ENCODE measurements at regions of chr15 and their contacts with region 1.

Region 1: DNA sequence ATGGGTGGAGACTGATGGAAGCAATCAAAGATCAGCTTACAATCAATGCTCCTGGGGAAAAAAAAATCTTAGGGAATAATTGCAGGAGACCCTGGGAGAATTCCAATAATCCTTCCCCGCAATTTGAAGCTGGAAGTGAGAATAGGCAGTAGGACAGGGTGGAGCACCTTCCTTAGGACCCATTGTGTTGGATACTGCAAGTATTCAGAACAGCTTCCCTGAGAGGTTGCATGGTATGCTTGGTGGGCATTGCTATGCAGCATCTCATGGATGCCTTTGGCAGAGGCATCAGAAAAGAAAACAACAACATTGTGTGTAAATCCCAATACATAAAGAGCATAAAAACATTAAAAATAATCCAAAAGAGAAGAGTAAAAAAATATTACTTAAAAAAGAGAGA is 24.6 kb upstream of the DUT start:
- DNase-seq: no peak
- H3K4me3 ChIP-seq: no peak overlapping the region
- H3K27ac ChIP-seq: no peak overlapping the region
- H3K4me1 ChIP-seq: no peaks in the 10 kb centered on the region
- H3K27me3 ChIP-seq: no peaks in the 10 kb centered on the region
- CTCF ChIP-seq: no peak

Region 2: DNA sequence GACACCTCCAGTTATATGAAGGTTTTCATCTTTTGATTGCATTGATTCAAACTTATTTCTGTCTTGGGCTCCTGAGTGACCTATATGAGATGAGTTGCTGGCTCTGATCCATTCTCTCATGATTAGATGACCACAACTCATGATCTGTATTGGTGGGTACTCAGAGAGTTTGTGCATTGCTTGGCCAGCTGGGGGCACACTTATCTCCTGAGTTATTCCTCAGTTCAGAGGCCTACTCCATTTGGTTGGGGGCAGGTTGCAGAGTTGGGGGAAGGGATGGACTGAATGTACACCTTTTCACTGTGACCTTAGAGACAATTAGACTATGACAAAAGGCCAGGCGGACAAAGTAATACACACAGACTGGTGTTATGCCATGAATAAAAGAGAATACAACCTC is 755.6 kb before region 1 on chr15:
- CTCF ChIA-PET with region 1: no interaction called
- POLR2A ChIA-PET with region 1: no interaction called
- intact Hi-C with region 1: no loop called
- DNase-seq: peak; percentile 34
- H3K4me3 ChIP-seq: no peak overlapping the region
- H3K27ac ChIP-seq: no peak overlapping the region
- H3K4me1 ChIP-seq: no peaks in the 10 kb centered on the region
- H3K27me3 ChIP-seq: no peaks in the 10 kb centered on the region
- CTCF ChIP-seq: peak; percentile 60

Region 3: DNA sequence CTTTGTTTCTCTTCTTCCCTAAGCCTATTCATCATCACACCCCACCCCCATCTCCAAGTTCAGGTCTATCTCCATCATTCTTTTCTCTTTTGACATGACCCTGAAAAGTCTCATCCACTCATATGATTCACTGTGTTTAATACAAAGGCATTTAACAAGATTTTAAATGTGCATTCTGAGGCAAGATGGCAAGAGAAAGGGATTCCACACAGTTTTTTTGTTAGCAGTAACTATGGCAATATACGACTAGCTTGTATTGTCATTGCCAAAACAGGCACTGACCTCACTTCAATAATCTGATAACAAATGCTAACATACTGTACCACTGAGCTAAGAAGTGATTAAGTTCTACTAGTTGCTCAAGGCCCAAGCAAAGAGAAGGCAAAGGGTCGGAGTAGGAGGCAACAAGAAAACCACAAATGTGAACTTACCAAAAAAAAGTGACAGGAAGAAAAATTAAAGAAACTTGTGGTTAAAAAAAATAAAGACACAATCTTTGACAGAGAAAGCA is 285.6 kb after region 1 on chr15:
- CTCF ChIA-PET with region 1: no interaction called
- POLR2A ChIA-PET with region 1: interaction called, 15 read pairs
- intact Hi-C with region 1: no loop called
- DNase-seq: peak; percentile 28
- H3K4me3 ChIP-seq: no peak overlapping the region
- H3K27ac ChIP-seq: no peak overlapping the region
- H3K4me1 ChIP-seq: peaks cover under 1% of the 10 kb centered on the region
- H3K27me3 ChIP-seq: no peaks in the 10 kb centered on the region
- CTCF ChIP-seq: no peak

Region 4: GRCh38 chr15:48609486-48609885 is 302.8 kb after region 1 on chr15:
- CTCF ChIA-PET with region 1: no interaction called
- POLR2A ChIA-PET with region 1: no interaction called
- intact Hi-C with region 1: no loop called
- DNase-seq: no peak
- H3K4me3 ChIP-seq: no peak overlapping the region
- H3K27ac ChIP-seq: no peak overlapping the region
- H3K4me1 ChIP-seq: no peaks in the 10 kb centered on the region
- H3K27me3 ChIP-seq: no peaks in the 10 kb centered on the region
- CTCF ChIP-seq: no peak